Gastrocnemius medialis (tissue), 4 donors: ENCODE measurements at regions of chr21 and their contacts with region 1.

Region 1: GRCh38 chr21:29372063-29372802 is 73.5 kb downstream of the BACH1 start:
- DNase-seq: peak; percentile 34 to 37
- ATAC-seq: peak; percentile 91 to 93
- H3K4me3 ChIP-seq: no peak overlapping the region
- H3K27ac ChIP-seq: no peak overlapping the region
- H3K4me1 ChIP-seq: peaks cover 0 to 5% of the 10 kb centered on the region in 2 donors
- H3K27me3 ChIP-seq: no peaks in the 10 kb centered on the region
- CTCF ChIP-seq: peak; percentile 77 to 88 (median 83)
- POLR2A ChIP-seq: no peak

Region 2: DNA sequence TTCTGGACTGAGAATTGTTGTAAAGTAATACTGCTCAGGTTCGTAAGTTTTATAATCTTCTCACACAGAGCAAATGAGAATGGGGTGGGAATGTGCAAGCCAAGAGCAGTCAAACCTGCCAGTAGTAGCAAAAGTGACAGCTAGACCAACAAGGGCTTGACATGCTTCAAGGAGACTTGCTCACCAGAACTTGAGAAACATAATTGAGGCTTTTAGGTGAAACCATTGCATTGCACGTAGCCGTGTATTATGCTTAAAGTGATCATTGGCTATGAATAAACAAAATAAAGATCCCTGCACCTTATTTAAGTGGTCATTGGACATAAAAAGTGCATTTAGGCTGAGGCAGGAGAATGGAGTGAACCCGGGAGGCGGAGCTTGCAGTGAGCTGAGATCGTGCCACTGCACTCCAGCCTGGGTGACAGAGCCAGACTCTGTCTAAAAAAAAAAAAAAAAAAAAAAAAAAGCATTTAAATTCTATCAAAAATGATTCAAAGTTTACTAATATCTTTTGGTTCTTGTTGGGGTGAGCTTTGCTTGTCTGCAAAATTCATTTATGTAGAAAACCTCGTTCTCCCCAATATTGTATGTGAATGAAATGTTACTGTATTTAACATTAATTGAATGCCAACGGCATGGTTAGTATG is 287.0 kb before region 1 on chr21:
- in situ Hi-C with region 1: loop called (anchors 5 kb)
- intact Hi-C with region 1: loop called (anchors 1 kb)
- DNase-seq: no peak
- ATAC-seq: no peak
- H3K4me3 ChIP-seq: no peak overlapping the region
- H3K27ac ChIP-seq: no peak overlapping the region
- H3K4me1 ChIP-seq: no peaks in the 10 kb centered on the region
- H3K27me3 ChIP-seq: no peaks in the 10 kb centered on the region
- CTCF ChIP-seq: no peak
- POLR2A ChIP-seq: no peak

Region 3: DNA sequence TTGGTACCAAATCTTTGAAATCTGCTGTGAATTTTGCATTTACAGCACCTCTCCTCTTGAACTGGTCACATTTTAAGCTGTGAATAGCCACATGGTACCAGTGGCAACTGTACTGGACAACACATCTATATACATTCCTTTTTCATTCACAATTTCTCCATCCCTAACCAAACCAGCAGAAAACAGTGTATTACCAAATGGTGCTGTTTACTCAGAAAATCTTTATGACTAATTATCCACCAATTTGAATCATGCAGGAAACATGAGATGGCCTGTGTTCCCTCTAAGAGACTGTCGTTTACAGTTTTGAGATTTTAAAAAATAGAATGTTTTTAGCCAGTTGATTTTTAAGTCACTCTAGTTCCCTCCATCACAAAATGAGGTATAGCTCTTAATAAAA is 281.2 kb before region 1 on chr21:
- in situ Hi-C with region 1: loop called (anchors 5 kb)
- intact Hi-C with region 1: loop called (anchors 1 kb)
- DNase-seq: no peak
- ATAC-seq: no peak
- H3K4me3 ChIP-seq: no peak overlapping the region
- H3K27ac ChIP-seq: no peak overlapping the region
- H3K4me1 ChIP-seq: peaks cover 5 to 16% of the 10 kb centered on the region in 2 donors
- H3K27me3 ChIP-seq: no peaks in the 10 kb centered on the region
- CTCF ChIP-seq: no peak
- POLR2A ChIP-seq: no peak

Region 4: DNA sequence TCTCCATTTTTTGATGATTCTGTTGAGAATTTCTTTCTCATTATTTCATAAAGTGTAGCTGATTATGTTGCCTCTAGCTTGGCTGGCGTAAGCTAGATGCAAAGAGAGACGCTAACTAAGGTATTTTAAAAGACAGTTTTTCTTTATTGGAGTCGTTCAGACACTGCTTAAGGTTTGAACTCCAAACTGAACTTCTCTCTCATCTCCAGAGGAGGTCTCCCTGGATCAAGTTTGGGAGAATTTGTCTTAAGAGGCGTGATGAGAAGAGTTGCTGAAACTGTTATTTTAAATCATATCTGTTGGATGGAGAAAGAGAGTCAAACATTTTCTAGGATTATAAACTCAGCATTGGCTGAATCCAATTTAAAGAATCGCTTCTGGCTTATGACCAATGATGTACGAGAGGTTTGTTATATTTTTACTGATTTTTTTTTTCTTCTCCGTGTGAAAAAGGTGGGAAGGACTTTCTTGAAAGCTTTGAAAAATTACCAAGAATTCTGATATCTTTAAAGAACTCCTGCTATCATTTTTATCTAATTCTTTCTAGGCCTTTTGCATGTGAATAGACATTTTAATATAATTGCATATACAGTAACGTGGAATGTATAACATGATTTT is 207.8 kb before region 1 on chr21:
- in situ Hi-C with region 1: loop called (anchors 5 to 10 kb)
- intact Hi-C with region 1: loop called (anchors 1 kb)
- DNase-seq: no peak
- ATAC-seq: peak; percentile 82 to 85
- H3K4me3 ChIP-seq: no peak overlapping the region
- H3K27ac ChIP-seq: peak overlapping the region in 1 of 4 donors; percentile 32
- H3K4me1 ChIP-seq: peaks cover 4 to 9% of the 10 kb centered on the region in 2 donors
- H3K27me3 ChIP-seq: no peaks in the 10 kb centered on the region
- CTCF ChIP-seq: peak in 4 of 5 experiments; percentile 51 to 66 (median 64)
- POLR2A ChIP-seq: no peak

Region 5: DNA sequence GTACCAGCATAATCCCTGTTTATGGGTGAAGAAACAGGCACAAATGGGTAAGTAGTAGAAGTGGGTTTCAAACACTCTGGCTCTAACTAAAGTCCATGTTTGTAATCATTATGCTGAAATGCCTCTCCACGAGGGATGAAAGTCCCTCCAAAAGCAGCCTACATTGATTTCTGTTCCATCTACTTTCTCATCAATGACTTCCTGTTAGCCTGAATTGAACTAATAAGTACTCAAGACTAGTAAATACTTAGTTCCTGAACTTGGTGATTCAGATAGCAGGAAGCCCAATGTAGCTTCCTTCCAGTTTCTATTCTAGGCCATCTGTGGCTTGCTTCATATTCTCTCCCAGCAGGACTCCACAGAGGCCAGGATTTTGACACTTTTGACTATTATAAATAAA is 84.8 kb before region 1 on chr21:
- in situ Hi-C with region 1: loop called in 2 of 4 experiments (anchors 10 kb)
- intact Hi-C with region 1: no loop called
- DNase-seq: no peak
- ATAC-seq: no peak
- H3K4me3 ChIP-seq: no peak overlapping the region
- H3K27ac ChIP-seq: no peak overlapping the region
- H3K4me1 ChIP-seq: peaks cover 5 to 13% of the 10 kb centered on the region in 2 donors
- H3K27me3 ChIP-seq: no peaks in the 10 kb centered on the region
- CTCF ChIP-seq: no peak
- POLR2A ChIP-seq: no peak